ENCODE measurements at regions of chr11 and their contacts with region 1.

Region 1: DNA sequence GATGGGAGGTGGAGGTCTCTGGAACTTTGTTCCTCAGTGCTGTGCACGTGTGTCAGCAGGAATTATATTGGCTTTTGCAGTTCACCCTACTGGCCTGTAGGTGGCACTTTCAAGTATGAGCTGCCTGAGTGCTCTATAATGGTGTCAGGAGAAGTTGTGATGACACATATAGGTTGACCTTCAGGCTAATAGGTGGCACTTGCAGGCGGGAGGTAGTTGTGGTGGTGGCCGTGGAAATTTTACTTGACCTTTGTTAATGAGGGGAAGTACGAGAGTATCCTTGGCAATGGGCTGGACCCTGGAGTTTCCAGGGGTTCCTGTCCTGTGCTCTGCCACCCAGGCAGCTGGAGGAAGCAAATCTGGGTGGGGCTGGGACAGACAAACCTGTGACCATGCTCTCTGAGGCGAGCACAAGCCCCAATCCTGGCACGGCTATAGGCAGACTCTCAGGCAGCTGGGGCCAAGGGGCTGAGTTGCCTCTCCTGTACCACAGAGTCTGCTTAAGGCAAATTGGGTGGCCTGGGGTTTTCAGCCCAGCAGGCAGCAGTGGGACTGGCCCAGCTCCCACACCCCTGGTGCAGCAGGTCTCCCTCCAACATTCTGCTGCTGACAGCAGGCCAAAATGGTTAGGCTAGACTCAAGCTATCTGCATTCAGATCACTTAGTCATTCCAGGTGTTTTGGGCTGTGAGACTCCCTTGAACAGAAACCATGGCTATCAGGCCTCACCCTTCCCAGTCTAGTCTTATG is 147.5 kb upstream of the CTSC start:
- DNase-seq: peak; percentile 83
- ATAC-seq: peak; percentile 4; the same call in 1 of the 2 replicates
- H3K4me3 ChIP-seq: no peak overlapping the region
- H3K27ac ChIP-seq: peak overlapping the region; percentile 35
- H3K4me1 ChIP-seq: peaks cover 86% of the 10 kb centered on the region
- H3K27me3 ChIP-seq: no peaks in the 10 kb centered on the region
- CTCF ChIP-seq: peak; percentile 89

Region 2: GRCh38 chr11:87892291-87892690 is 592.8 kb before region 1 on chr11:
- CTCF ChIA-PET with region 1: no interaction called
- POLR2A ChIA-PET with region 1: no interaction called
- intact Hi-C with region 1: loop called (anchors 10 kb)
- DNase-seq: no peak
- ATAC-seq: no peak
- H3K4me3 ChIP-seq: no peak overlapping the region
- H3K27ac ChIP-seq: no peak overlapping the region
- H3K4me1 ChIP-seq: peaks cover 8% of the 10 kb centered on the region
- H3K27me3 ChIP-seq: no peaks in the 10 kb centered on the region
- CTCF ChIP-seq: no peak

Region 3: GRCh38 chr11:88337181-88337986 is 147.7 kb before region 1 on chr11 and contains the start of gene CTSC:
- CTCF ChIA-PET with region 1: no interaction called
- POLR2A ChIA-PET with region 1: no interaction called
- intact Hi-C with region 1: loop called (anchors 5 kb)
- DNase-seq: peak; percentile 96
- ATAC-seq: peak; percentile 85
- H3K4me3 ChIP-seq: peak within 1 kb of the TSS; percentile 98
- H3K27ac ChIP-seq: peak within 1 kb of the TSS; percentile 78
- H3K4me1 ChIP-seq: peaks cover 48% of the 10 kb centered on the region
- H3K27me3 ChIP-seq: no peaks in the 10 kb centered on the region
- CTCF ChIP-seq: no peak
- total RNA-seq, gene CTSC: 200 and 240 TPM in 2 replicates

Region 4: DNA sequence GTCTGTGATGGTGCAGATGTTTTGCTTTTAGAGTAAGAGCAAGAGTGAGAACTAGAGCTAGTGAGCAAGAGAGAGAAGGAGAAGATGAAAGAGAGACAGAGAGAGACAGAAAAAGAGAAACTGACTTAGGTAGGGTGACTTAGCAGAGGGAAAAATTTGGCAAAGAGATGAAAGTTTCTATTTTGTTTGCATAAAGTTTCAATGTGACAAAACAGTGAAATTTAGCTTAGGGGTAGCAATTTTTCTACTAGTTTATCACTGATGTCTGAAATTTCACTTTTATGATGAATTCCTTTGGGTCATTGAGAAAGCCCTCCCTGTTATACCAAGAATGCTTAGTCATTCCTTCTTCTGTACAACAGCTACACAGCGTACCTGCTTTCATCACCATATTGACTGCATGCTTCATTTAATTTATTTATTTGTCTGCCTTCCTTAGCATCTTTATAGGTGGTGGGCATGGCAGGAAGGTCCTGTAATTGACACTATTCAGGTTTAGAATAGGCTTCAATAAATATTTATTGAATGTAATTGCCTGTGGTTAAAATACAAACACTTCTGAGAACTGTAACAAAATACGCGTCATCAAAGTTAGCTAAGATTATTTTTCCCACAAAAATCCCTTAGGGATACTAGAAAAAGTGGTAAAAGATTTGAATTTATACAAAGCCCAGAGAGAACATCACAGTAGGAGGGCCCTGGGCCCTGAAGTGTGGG is 127.6 kb before region 1 on chr11:
- CTCF ChIA-PET with region 1: no interaction called
- POLR2A ChIA-PET with region 1: no interaction called
- intact Hi-C with region 1: loop called (anchors 5 kb)
- DNase-seq: peak; percentile 87
- ATAC-seq: peak; percentile 96
- H3K4me3 ChIP-seq: peak overlapping the region; percentile 15; the same call in 1 of the 2 replicates
- H3K27ac ChIP-seq: peak overlapping the region; percentile 94
- H3K4me1 ChIP-seq: peaks cover 31% of the 10 kb centered on the region
- H3K27me3 ChIP-seq: no peaks in the 10 kb centered on the region
- CTCF ChIP-seq: no peak

Region 5: GRCh38 chr11:88402192-88402715 is 82.8 kb before region 1 on chr11:
- CTCF ChIA-PET with region 1: no interaction called
- POLR2A ChIA-PET with region 1: no interaction called
- intact Hi-C with region 1: loop called (anchors 5 kb)
- DNase-seq: peak; percentile 78
- ATAC-seq: peak; percentile 50
- H3K4me3 ChIP-seq: peak overlapping the region; percentile 34; the same call in 1 of the 2 replicates
- H3K27ac ChIP-seq: peak overlapping the region; percentile 78
- H3K4me1 ChIP-seq: peaks cover 44% of the 10 kb centered on the region
- H3K27me3 ChIP-seq: no peaks in the 10 kb centered on the region
- CTCF ChIP-seq: no peak